ENCODE measurements at regions of chr17 and their contacts with region 1.

Region 1: DNA sequence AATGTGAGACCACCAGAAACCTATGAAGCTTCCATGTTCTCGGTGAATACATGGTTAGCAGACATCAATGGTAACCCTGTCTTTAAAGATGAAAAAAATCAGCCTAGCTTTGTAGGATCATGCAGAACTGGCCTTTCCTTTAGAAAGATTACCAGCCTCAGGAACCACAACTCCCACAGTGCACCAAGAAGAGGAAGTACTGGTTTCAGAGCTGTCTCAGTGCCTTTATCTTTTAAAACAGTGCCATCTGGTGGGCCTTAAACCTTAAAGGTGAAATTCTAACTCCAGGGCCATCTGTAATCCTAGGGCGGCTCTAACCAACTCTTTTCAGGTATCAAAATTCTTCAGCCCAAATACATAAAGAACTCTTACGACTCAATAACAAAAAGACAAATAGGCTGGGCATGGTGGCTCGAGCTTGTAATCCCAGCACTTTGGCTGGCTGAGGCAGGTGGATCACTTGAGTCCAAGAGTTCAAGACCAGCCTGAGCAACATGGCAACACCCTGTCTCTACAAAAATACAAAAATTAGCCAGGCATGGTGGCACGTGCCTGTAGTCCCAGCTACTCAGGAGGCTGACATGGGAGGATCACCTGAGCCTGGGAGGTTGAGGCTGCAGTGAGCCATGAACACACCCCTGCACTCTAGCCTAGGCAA is 5.4 kb downstream of the ATPAF2 start:
- DNase-seq: peak in 2 of 5 donors; percentile 67 to 70
- ATAC-seq: peak; percentile 74 to 89 (median 85)
- H3K4me3 ChIP-seq: no peak overlapping the region
- H3K27ac ChIP-seq: no peak overlapping the region
- H3K4me1 ChIP-seq: peaks cover 0 to 54% (median 26%) of the 10 kb centered on the region in 12 donors
- H3K27me3 ChIP-seq: no peaks in the 10 kb centered on the region
- CTCF ChIP-seq: peak; percentile 42 to 74 (median 64)
- POLR2A ChIP-seq: no peak

Region 2: GRCh38 chr17:17675925-17676534 is 357.5 kb before region 1 on chr17:
- intact Hi-C with region 1: loop called (anchors 1 to 10 kb)
- DNase-seq: no peak
- ATAC-seq: no peak
- H3K4me3 ChIP-seq: no peak overlapping the region
- H3K27ac ChIP-seq: no peak overlapping the region
- H3K4me1 ChIP-seq: peaks cover 0 to 34% (median 13%) of the 10 kb centered on the region in 12 donors
- H3K27me3 ChIP-seq: no peaks in the 10 kb centered on the region
- CTCF ChIP-seq: no peak
- POLR2A ChIP-seq: no peak

Region 3: DNA sequence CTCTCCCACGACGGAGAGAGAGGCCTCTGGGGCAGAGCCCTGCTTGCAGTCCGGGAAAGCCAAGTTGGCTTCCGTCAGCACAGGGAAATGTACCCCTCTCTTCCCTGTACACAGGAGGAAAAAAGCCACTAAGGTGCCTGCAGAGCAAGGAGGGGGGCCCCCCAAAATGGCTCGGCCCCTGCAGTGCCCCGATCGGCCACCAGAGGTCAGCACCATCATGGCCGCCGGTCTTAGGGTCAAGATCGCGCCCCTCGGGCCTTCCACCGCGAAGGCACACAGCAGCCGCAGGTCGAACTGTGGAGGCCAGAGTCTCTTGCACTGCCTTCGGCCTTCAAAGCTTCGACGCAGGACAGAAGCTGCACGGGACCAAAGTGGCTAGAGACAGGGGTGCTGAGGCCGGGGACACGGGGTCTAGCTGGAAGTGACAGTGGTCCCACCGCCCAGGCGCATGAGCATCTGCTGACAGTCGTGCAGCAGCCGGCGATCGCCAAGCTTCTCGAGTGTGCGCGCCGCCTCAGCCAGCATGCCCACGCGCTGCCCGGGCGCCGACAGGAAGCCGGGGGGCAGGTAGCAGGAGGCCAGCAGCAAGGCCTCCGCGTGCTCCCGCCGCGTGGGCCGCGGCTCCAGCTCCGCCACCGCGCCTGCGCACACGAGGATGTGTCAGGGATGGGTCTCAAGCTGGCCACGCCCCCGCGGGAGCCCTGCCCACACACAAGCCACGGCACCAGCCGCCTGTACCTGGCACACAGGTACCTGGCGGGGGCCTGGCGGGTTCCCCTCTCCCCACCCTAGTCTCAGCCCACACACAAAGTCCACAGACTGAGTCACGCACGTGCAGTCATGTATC is 221.1 kb before region 1 on chr17:
- intact Hi-C with region 1: loop called in 6 of 10 experiments (anchors 2 to 10 kb)
- DNase-seq: peak; percentile 74 to 89 (median 77)
- ATAC-seq: peak; percentile 21 to 46 (median 40)
- H3K4me3 ChIP-seq: no peak overlapping the region
- H3K27ac ChIP-seq: peak overlapping the region in 6 of 12 donors; percentile 3 to 71 (median 21)
- H3K4me1 ChIP-seq: peaks cover 9 to 82% (median 30%) of the 10 kb centered on the region in 12 donors
- H3K27me3 ChIP-seq: no peaks in the 10 kb centered on the region
- CTCF ChIP-seq: peak in 11 of 12 donors; percentile 99 to 100 (median 100)
- POLR2A ChIP-seq: no peak

Region 4: GRCh38 chr17:17890773-17891759 is 142.5 kb before region 1 on chr17:
- intact Hi-C with region 1: loop called (anchors 2 to 10 kb)
- DNase-seq: peak in 3 of 5 donors; percentile 49 to 64 (median 58)
- ATAC-seq: peak; percentile 58 to 74 (median 65)
- H3K4me3 ChIP-seq: no peak overlapping the region
- H3K27ac ChIP-seq: no peak overlapping the region
- H3K4me1 ChIP-seq: peaks cover 4 to 41% (median 21%) of the 10 kb centered on the region in 12 donors
- H3K27me3 ChIP-seq: no peaks in the 10 kb centered on the region
- CTCF ChIP-seq: peak; percentile 43 to 78 (median 62)
- POLR2A ChIP-seq: no peak

Region 5: GRCh38 chr17:17994271-17995069 is 39.1 kb before region 1 on chr17:
- intact Hi-C with region 1: loop called in 7 of 10 experiments (anchors 1 to 5 kb)
- DNase-seq: peak in 3 of 5 donors; percentile 32 to 62 (median 36)
- ATAC-seq: peak; percentile 55 to 83 (median 75)
- H3K4me3 ChIP-seq: no peak overlapping the region
- H3K27ac ChIP-seq: no peak overlapping the region
- H3K4me1 ChIP-seq: peaks cover 0 to 8% (median 0%) of the 10 kb centered on the region in 12 donors
- H3K27me3 ChIP-seq: no peaks in the 10 kb centered on the region
- CTCF ChIP-seq: peak in 11 of 12 donors; percentile 26 to 62 (median 46)
- POLR2A ChIP-seq: no peak

Region 6: DNA sequence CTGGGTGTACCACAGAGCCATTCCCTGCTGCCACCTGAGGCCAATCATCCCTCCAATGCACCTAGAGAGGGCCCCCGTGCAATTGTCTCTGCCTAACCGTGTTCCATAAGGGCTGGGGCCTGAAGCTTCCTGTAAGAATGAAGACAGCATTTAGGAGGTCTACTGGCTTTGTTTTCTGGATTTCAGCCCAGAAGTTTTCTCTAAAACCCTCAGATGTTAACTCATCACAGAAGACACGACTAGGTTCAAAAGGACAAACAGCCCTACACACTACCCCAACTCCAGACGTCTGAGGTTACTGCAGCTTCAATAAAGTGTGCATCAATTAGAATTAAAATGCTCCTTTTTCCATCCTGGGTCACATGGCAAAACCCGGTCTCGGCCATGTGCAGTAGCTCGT is 43.4 kb after region 1 on chr17:
- intact Hi-C with region 1: no loop called
- DNase-seq: no peak
- ATAC-seq: no peak
- H3K4me3 ChIP-seq: no peak overlapping the region
- H3K27ac ChIP-seq: no peak overlapping the region
- H3K4me1 ChIP-seq: no peaks in the 10 kb centered on the region
- H3K27me3 ChIP-seq: no peaks in the 10 kb centered on the region
- CTCF ChIP-seq: no peak
- POLR2A ChIP-seq: no peak

Region 7: GRCh38 chr17:18087610-18088491 is 54.3 kb after region 1 on chr17 and contains the start of gene DRG2:
- intact Hi-C with region 1: no loop called
- DNase-seq: peak; percentile 91 to 95 (median 93)
- ATAC-seq: peak; percentile 93 to 98 (median 97)
- H3K4me3 ChIP-seq: peak within 1 kb of the TSS; percentile 61 to 99 (median 86)
- H3K27ac ChIP-seq: peak within 1 kb of the TSS; percentile 66 to 89 (median 80)
- H3K4me1 ChIP-seq: peaks cover 0 to 21% (median 13%) of the 10 kb centered on the region in 12 donors
- H3K27me3 ChIP-seq: no peaks in the 10 kb centered on the region
- CTCF ChIP-seq: peak in 4 of 12 donors; percentile 23 to 33 (median 30)
- POLR2A ChIP-seq: peak in 1 of 2 donors; percentile 56
- total RNA-seq, gene DRG2: 17.5 to 28.8 (median 19.5) TPM

Region 8: GRCh38 chr17:18099516-18099915 is 65.9 kb after region 1 on chr17:
- intact Hi-C with region 1: no loop called
- DNase-seq: no peak
- ATAC-seq: no peak
- H3K4me3 ChIP-seq: no peak overlapping the region
- H3K27ac ChIP-seq: no peak overlapping the region
- H3K4me1 ChIP-seq: no peaks in the 10 kb centered on the region
- H3K27me3 ChIP-seq: no peaks in the 10 kb centered on the region
- CTCF ChIP-seq: no peak
- POLR2A ChIP-seq: no peak

Region 9: GRCh38 chr17:18117982-18118975 is 84.7 kb after region 1 on chr17:
- intact Hi-C with region 1: no loop called
- DNase-seq: no peak
- ATAC-seq: no peak
- H3K4me3 ChIP-seq: no peak overlapping the region
- H3K27ac ChIP-seq: no peak overlapping the region
- H3K4me1 ChIP-seq: no peaks in the 10 kb centered on the region
- H3K27me3 ChIP-seq: peaks cover 0 to 8% (median 0%) of the 10 kb centered on the region in 9 donors
- CTCF ChIP-seq: no peak
- POLR2A ChIP-seq: no peak